ENCODE measurements at regions of chr3 and their contacts with region 1.

Region 1: GRCh38 chr3:197256836-197257444 is 41.5 kb downstream of the DLG1 start:
- DNase-seq: peak; percentile 39
- ATAC-seq: no peak
- H3K4me3 ChIP-seq: no peak overlapping the region
- H3K27ac ChIP-seq: no peak overlapping the region
- H3K4me1 ChIP-seq: no peaks in the 10 kb centered on the region
- H3K27me3 ChIP-seq: no peaks in the 10 kb centered on the region
- CTCF ChIP-seq: peak; percentile 58 to 65 (median 62); a peak in 5 of 6 replicates
- POLR2A ChIP-seq: no peak
- RAD21 ChIP-seq: peak; percentile 73

Region 2: DNA sequence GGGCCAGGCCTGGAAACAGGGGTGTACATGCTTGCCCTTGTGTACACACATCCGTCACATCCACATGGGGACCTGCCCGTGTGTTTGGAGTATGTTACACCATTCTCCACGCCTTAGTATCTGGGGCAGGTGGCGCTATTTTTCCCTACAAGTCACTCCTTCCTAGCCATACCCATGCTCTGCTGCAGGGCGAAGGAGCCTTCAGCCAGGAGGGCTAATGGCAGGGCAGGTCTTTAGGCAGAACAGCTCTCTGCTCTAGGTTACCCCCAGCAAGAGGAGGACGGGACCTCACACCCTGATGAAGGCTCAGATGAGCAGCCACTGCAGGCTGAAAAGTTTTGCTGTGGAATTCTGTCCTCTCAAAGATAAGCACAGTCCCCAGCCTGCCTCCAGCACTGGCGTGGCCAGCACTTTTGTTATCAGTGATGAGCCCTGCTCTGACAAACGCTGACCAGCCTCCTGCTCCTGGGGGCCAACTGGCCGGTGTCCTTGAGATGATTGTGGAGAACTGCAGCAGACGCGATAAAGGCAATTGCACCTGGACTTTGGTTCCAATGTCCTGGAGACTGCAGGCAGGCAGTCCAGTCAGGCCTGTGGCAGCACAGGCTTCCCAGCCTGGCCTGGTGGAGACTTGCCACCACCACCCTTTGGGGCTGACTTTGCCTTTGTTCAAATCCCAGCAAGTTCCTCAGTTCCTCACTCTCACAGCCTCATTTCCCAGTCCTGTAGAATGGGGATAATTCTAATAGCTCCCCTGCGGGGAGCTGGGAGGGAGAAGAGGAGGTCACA is 268.5 kb before region 1 on chr3:
- CTCF ChIA-PET with region 1: no interaction called
- POLR2A ChIA-PET with region 1: no interaction called
- RAD21 ChIA-PET with region 1: no interaction called
- intact Hi-C with region 1: no loop called
- DNase-seq: peak; percentile 56
- ATAC-seq: peak; percentile 94
- H3K4me3 ChIP-seq: no peak overlapping the region
- H3K27ac ChIP-seq: no peak overlapping the region
- H3K4me1 ChIP-seq: peaks cover 0 to 4% of the 10 kb centered on the region in 2 experiments; a peak in 1 of 4 replicates
- H3K27me3 ChIP-seq: no peaks in the 10 kb centered on the region
- CTCF ChIP-seq: peak; percentile 34 to 44 (median 44); a peak in 5 of 6 replicates
- POLR2A ChIP-seq: no peak
- RAD21 ChIP-seq: peak; percentile 59

Region 3: GRCh38 chr3:197270558-197271317 is 13.8 kb after region 1 on chr3:
- CTCF ChIA-PET with region 1: interaction called, 11 read pairs
- POLR2A ChIA-PET with region 1: no interaction called
- RAD21 ChIA-PET with region 1: no interaction called
- intact Hi-C with region 1: no loop called
- DNase-seq: no peak
- ATAC-seq: no peak
- H3K4me3 ChIP-seq: no peak overlapping the region
- H3K27ac ChIP-seq: no peak overlapping the region
- H3K4me1 ChIP-seq: no peaks in the 10 kb centered on the region
- H3K27me3 ChIP-seq: no peaks in the 10 kb centered on the region
- CTCF ChIP-seq: no peak
- POLR2A ChIP-seq: no peak
- RAD21 ChIP-seq: no peak

Region 4: DNA sequence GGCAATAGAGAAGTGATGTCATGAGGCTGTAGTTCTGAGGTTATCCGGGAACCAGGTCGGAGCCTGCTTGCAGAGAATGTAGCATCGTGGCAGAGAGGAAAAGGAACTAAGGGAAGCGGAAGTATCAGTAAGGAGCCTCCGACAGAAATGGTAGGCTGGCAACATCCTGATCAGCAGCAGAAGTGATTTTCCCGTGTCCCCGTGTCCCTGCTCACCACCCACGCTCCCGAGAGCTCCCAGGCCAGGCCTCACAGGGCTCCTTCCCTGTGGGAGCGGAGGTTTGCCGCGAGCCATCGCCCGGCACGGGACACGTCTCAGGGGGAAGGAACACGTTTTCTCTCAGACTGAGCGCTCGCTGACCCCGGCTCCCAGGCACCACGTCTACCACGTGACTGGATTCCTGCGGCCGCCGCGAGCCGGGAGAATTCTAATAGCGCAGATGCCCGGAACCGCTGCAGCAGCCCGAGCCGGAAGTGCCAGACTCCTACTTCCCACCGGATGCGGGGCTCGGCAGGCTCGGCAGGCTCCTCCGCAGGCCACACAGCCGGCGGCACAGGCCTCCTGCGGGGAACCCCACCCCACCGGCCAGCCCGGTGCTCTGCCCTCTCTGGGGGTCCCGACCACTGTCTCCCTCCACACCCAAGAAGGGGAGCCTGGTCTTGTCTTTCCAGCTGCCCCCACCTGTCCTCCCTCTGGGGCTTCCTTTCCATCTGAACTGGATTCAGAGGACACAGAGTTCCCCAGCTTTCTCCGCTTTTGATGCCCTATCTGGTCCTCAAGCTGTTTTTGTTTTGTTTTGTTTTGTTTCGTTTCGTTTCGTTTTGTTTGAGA is 199.5 kb after region 1 on chr3:
- CTCF ChIA-PET with region 1: interaction called, 19 read pairs
- POLR2A ChIA-PET with region 1: no interaction called
- RAD21 ChIA-PET with region 1: interaction called in 1 of 2 experiments, 3 read pairs
- intact Hi-C with region 1: loop called (anchors 5 kb)
- DNase-seq: peak; percentile 54
- ATAC-seq: peak; percentile 87
- H3K4me3 ChIP-seq: peak overlapping the region; percentile 68 to 81
- H3K27ac ChIP-seq: peak overlapping the region; percentile 72
- H3K4me1 ChIP-seq: peaks cover 4 to 27% of the 10 kb centered on the region in 2 experiments; a peak in 1 of 4 replicates
- H3K27me3 ChIP-seq: no peaks in the 10 kb centered on the region
- CTCF ChIP-seq: no peak
- POLR2A ChIP-seq: peak; percentile 68
- RAD21 ChIP-seq: peak; percentile 36

Region 5: DNA sequence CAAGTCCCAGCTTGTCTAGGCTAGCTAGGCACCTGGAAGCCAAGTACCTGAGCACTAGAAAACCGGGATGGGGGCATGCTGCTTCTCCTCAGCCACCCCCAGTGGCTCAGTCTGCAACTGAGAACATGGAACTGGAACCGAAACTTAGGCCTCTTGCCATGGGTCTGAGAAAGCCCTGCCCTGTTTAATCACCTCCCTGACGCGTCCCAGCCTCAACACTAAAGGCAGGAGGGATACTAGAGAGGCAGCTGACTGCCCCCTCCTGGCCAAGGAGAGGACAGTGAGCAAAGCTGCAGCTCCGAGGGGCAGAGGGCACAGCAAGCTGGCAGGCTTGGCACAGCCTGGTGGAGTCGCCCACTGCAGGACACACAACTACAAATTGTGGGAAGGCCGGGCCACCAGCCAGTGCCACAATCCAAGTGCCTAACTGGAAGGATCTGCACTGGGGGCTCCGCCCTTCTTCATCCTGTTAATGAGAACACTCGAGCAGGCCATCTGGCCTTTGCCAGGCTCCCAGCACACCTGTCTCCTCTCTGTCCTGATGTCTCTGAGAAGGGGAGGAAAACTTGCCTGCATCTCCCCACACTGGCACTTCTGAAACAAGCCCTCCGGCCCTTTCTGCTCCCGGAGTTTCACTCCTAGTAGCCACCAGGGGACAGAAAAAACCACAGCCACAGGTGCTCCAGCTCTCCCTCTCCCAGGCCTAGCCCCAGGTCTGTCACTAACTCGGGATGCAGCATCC is 245.1 kb after region 1 on chr3:
- CTCF ChIA-PET with region 1: interaction called, 27 read pairs
- POLR2A ChIA-PET with region 1: no interaction called
- RAD21 ChIA-PET with region 1: no interaction called
- intact Hi-C with region 1: no loop called
- DNase-seq: no peak
- ATAC-seq: peak; percentile 74
- H3K4me3 ChIP-seq: no peak overlapping the region
- H3K27ac ChIP-seq: no peak overlapping the region
- H3K4me1 ChIP-seq: peaks cover 9 to 30% of the 10 kb centered on the region in 2 experiments; a peak in 3 of 4 replicates
- H3K27me3 ChIP-seq: no peaks in the 10 kb centered on the region
- CTCF ChIP-seq: peak; percentile 62 to 76 (median 66); a peak in 5 of 6 replicates
- POLR2A ChIP-seq: no peak
- RAD21 ChIP-seq: peak; percentile 82

Region 6: DNA sequence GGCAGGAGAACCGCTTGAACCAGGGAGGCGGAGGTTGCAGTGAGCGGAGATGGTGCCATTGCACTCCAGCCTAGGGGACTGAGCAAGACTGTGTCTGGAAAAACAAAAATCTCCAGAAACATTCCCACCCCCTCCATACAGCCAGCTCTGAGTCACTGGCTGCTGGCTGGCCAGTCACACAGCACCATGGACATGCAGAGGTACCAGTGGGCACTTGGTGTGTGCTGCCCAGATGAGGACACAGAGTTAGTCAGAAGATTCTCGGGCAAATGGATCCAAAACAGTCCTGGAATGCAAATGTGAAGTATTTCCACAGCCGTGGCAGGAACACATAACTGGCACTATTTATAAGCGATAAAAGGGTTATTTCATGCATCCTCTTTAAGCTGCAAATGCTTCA is 254.2 kb after region 1 on chr3:
- CTCF ChIA-PET with region 1: interaction called, 3 read pairs
- POLR2A ChIA-PET with region 1: no interaction called
- RAD21 ChIA-PET with region 1: no interaction called
- intact Hi-C with region 1: loop called (anchors 2 kb)
- DNase-seq: no peak
- ATAC-seq: no peak
- H3K4me3 ChIP-seq: no peak overlapping the region
- H3K27ac ChIP-seq: no peak overlapping the region
- H3K4me1 ChIP-seq: peaks cover under 1 to 12% of the 10 kb centered on the region in 2 experiments; a peak in 3 of 4 replicates
- H3K27me3 ChIP-seq: no peaks in the 10 kb centered on the region
- CTCF ChIP-seq: no peak
- POLR2A ChIP-seq: no peak
- RAD21 ChIP-seq: no peak

Measured in HCT116 (cell line).